ENCODE measurements at regions of chr7 and their contacts with region 1.

Region 1: GRCh38 chr7:116180302-116180701 is 30.0 kb upstream of the TES start:
- DNase-seq: peak; percentile 50 to 75 (median 63)
- H3K4me3 ChIP-seq: no peak overlapping the region
- H3K27ac ChIP-seq: no peak overlapping the region
- H3K4me1 ChIP-seq: no peaks in the 10 kb centered on the region
- H3K27me3 ChIP-seq: no peaks in the 10 kb centered on the region

Region 2: DNA sequence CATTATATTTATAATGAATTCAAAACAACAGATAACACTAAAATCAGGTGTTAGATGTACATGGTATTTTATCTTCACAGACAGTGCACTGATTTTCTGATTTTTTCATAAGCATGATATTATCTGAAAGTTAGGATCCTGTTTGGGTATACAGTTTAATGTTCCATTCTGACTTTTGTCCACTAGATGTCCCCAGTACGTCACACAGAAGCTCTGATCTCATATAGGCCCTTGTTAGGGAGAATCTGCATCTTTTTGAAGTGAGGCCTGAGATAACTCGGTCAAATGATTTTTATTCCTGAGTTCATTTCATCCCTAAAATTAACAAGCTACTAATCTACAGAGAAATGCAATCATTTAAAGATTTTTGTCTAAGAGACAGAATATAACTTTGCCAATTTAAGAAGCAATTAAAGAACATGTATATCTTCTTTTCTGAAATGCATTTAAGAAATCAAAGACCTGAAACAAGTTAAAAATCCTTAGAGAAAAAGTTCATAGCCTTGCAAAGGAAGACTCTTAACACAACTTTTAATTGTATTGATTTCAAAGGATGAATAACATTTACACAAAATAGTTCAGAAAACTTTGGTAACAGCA is 42.0 kb before region 1 on chr7:
- CTCF ChIA-PET with region 1: interaction called, 29 read pairs
- POLR2A ChIA-PET with region 1: no interaction called
- DNase-seq: peak; percentile 65 to 78 (median 73)
- H3K4me3 ChIP-seq: no peak overlapping the region
- H3K27ac ChIP-seq: no peak overlapping the region
- H3K4me1 ChIP-seq: peaks cover 0 to 12% (median 0%) of the 10 kb centered on the region in 4 experiments
- H3K27me3 ChIP-seq: no peaks in the 10 kb centered on the region

Region 3: DNA sequence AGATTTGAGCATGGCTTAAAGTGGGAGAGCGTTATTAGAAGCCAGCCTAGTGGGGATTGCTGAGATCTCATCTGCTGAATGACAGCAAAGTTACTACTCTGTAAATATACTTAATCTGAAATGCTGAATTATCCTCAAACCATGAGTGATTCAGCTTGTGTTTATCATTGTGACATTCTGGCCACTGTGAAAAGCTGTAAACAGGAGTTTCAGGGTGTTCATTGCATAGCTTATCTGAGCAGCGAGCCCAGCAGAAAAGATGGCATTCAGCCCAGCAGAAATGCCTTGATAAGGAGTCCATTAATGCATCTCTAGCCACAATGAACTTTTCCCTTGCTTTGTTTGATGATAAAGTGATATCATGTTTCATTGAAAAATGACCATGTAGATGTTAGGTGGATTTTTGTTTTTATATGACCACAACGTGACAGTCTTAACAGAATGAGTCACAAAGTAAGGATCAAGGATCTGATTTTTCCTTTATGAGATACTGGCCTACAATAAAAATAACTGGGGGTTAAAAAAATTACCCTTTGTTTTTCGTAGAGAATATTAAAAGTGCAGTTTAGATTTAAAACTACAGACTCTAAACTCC is 37.8 kb after region 1 on chr7:
- CTCF ChIA-PET with region 1: interaction called, 31 read pairs
- POLR2A ChIA-PET with region 1: no interaction called
- DNase-seq: peak in 2 of 3 donors; percentile 44 to 56
- H3K4me3 ChIP-seq: peak overlapping the region in 1 of 7 experiments; percentile 11
- H3K27ac ChIP-seq: no peak overlapping the region
- H3K4me1 ChIP-seq: peaks cover 36 to 57% (median 52%) of the 10 kb centered on the region in 4 experiments
- H3K27me3 ChIP-seq: no peaks in the 10 kb centered on the region

Region 4: GRCh38 chr7:116224492-116225098 is 44.3 kb after region 1 on chr7:
- CTCF ChIA-PET with region 1: interaction called, 292 read pairs
- POLR2A ChIA-PET with region 1: no interaction called
- DNase-seq: peak in 2 of 3 donors; percentile 60 to 74
- H3K4me3 ChIP-seq: peak overlapping the region in 5 of 7 experiments; percentile 21 to 67 (median 39)
- H3K27ac ChIP-seq: no peak overlapping the region
- H3K4me1 ChIP-seq: peaks cover 2 to 22% (median 15%) of the 10 kb centered on the region in 4 experiments
- H3K27me3 ChIP-seq: no peaks in the 10 kb centered on the region

Region 5: DNA sequence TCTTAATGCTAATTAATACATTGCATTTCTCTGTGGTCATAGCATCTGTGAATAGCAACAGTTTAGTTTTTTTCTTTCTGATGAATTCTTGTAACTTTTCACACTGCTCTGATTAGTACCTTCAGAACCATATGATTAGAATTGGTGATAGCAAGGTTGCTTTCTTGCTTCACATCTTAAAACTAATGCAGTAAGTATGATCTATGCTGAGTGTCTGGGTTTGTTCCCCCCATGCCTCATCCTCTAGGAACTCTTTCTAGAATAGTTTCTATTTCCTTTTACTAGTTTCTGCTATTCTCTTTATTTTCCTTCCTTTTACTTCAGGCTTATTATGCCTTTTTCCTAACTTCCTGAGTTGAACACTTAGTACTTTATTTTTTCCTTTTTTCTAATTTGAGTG is 62.5 kb after region 1 on chr7:
- CTCF ChIA-PET with region 1: interaction called, 292 read pairs
- POLR2A ChIA-PET with region 1: no interaction called
- DNase-seq: no peak
- H3K4me3 ChIP-seq: no peak overlapping the region
- H3K27ac ChIP-seq: no peak overlapping the region
- H3K4me1 ChIP-seq: peaks cover 0 to 5% (median 0%) of the 10 kb centered on the region in 4 experiments
- H3K27me3 ChIP-seq: no peaks in the 10 kb centered on the region

Region 6: GRCh38 chr7:116249708-116250553 is 69.6 kb after region 1 on chr7:
- CTCF ChIA-PET with region 1: interaction called, 53 read pairs
- POLR2A ChIA-PET with region 1: no interaction called
- DNase-seq: peak; percentile 42 to 74 (median 70)
- H3K4me3 ChIP-seq: no peak overlapping the region
- H3K27ac ChIP-seq: no peak overlapping the region
- H3K4me1 ChIP-seq: no peaks in the 10 kb centered on the region
- H3K27me3 ChIP-seq: no peaks in the 10 kb centered on the region

Region 7: DNA sequence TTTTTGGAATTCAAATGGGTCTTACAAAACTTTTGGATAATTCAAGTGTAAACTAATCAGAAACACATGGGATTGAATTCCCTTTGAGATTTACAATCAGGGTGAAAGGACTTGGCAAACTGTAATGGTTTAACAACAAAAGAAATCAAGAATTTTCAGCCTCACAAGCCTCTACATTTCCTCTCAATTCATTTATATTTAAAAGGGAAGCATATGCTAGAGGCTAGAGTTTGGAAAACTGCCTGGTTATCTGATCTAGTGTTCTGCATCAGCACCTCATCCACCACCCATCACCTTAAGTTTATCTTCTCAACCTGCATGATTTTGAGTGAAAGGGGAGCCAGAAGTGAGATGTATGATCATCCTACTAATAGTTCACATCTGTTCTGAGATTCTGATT is 150.7 kb after region 1 on chr7:
- CTCF ChIA-PET with region 1: no interaction called
- POLR2A ChIA-PET with region 1: no interaction called
- DNase-seq: no peak
- H3K4me3 ChIP-seq: no peak overlapping the region
- H3K27ac ChIP-seq: no peak overlapping the region
- H3K4me1 ChIP-seq: no peaks in the 10 kb centered on the region
- H3K27me3 ChIP-seq: no peaks in the 10 kb centered on the region